ENCODE measurements at regions of chr2 and their contacts with region 1.

Region 1: DNA sequence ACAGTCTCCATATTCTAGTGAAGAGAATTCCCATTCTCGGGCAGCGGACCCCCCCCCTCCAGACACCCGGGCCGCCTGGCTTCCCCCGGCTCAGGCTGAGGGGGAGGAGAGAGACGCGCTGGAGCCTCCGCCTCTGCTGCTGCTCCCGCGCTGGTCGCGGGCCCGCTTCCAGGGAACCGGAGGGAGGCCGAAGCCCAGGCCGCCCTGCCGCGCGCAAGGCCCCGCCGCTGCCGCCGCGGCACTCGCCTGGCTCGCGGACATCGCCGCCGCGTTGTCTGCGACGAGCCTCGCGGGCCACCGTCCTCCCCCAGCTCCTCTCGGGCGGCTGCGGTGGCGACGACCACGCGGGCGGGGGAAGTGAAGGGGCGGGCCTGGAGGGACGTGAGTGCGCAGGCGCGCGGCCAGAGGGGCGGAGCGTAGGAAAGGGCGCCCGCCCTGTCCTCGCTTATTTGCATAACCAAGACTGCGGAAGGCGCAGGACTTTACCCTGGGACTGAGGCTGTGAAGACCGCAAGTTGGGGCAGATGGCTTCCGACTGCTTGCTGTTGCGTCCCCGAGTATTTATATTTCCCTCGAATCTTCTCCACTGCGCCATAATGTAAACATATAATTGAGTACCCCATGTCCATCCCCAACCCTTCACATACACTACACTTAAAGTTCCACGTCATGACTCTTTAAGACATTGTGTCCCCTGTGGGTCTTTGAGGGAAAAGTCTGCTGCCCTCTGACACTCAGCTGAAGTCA is at the start of gene ARL5A:
- DNase-seq: peak; percentile 93
- H3K4me3 Mint-ChIP-seq: peak within 1 kb of the TSS; percentile 96
- H3K27ac Mint-ChIP-seq: peak within 1 kb of the TSS; percentile 90
- H3K4me1 Mint-ChIP-seq: peaks cover 40% of the 10 kb centered on the region
- H3K27me3 Mint-ChIP-seq: no peaks in the 10 kb centered on the region
- total RNA-seq, gene ARL5A: 60.1 and 69.3 TPM in 2 replicates

Region 2: GRCh38 chr2:151289369-151290088 is 538.8 kb before region 1 on chr2 and contains the start of gene NMI:
- intact Hi-C with region 1: loop called (anchors 2 kb)
- DNase-seq: peak; percentile 74
- H3K4me3 Mint-ChIP-seq: peak within 1 kb of the TSS; percentile 88
- H3K27ac Mint-ChIP-seq: peak within 1 kb of the TSS; percentile 98
- H3K4me1 Mint-ChIP-seq: peaks cover 44% of the 10 kb centered on the region
- H3K27me3 Mint-ChIP-seq: peaks cover 8% of the 10 kb centered on the region
- total RNA-seq, gene NMI: 36.8 and 40.1 TPM in 2 replicates

Region 3: GRCh38 chr2:151481744-151482143 is 346.6 kb before region 1 on chr2:
- intact Hi-C with region 1: loop called (anchors 5 kb)
- DNase-seq: no peak
- H3K4me3 Mint-ChIP-seq: no peak overlapping the region
- H3K27ac Mint-ChIP-seq: peak overlapping the region; percentile 65
- H3K4me1 Mint-ChIP-seq: peaks cover 35% of the 10 kb centered on the region
- H3K27me3 Mint-ChIP-seq: no peaks in the 10 kb centered on the region

Region 4: GRCh38 chr2:152005607-152006006 is 177.3 kb after region 1 on chr2:
- intact Hi-C with region 1: loop called (anchors 2 kb)
- DNase-seq: no peak
- H3K4me3 Mint-ChIP-seq: no peak overlapping the region
- H3K27ac Mint-ChIP-seq: no peak overlapping the region
- H3K4me1 Mint-ChIP-seq: peaks cover 13% of the 10 kb centered on the region
- H3K27me3 Mint-ChIP-seq: peaks cover 8% of the 10 kb centered on the region

Region 5: GRCh38 chr2:152175458-152176325 is 347.4 kb after region 1 on chr2 and contains the start of gene STAM2:
- intact Hi-C with region 1: loop called (anchors 1 kb)
- DNase-seq: peak; percentile 91
- H3K4me3 Mint-ChIP-seq: peak within 1 kb of the TSS; percentile 95
- H3K27ac Mint-ChIP-seq: peak within 1 kb of the TSS; percentile 96
- H3K4me1 Mint-ChIP-seq: peaks cover 38% of the 10 kb centered on the region
- H3K27me3 Mint-ChIP-seq: peaks cover 3% of the 10 kb centered on the region
- total RNA-seq, gene STAM2: 18.6 and 20.0 TPM in 2 replicates

Region 6: DNA sequence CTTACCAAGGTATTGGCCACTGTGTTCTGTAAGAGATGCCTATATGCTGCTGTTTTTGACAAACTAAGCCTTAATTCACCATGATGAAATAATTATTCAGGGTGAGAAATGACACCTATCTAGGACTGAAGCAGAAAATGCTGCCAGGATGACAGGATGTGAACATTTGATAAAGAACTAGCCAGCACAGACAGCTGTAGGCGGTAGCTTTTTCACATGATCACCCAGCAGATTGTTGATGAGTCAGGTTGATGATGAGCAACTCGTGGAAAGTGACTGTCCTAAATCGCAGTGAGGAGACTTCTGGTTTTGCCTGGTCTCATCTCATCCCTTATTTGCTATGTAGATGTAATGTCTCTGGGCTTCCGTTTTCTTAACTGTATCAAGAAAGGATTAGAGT is 744.9 kb after region 1 on chr2:
- intact Hi-C with region 1: loop called (anchors 2 kb)
- DNase-seq: peak; percentile 7
- H3K4me3 Mint-ChIP-seq: no peak overlapping the region
- H3K27ac Mint-ChIP-seq: no peak overlapping the region
- H3K4me1 Mint-ChIP-seq: peaks cover 9% of the 10 kb centered on the region
- H3K27me3 Mint-ChIP-seq: peaks cover 6% of the 10 kb centered on the region